ENCODE measurements at regions of chr12 and their contacts with region 1.

Region 1: GRCh38 chr12:43957732-43958372 is 122.0 kb downstream of the TMEM117 start:
- DNase-seq: peak; percentile 49
- ATAC-seq: peak; percentile 90
- H3K4me3 ChIP-seq: no peak overlapping the region
- H3K27ac ChIP-seq: no peak overlapping the region
- H3K4me1 ChIP-seq: no peaks in the 10 kb centered on the region
- H3K27me3 ChIP-seq: no peaks in the 10 kb centered on the region
- CTCF ChIP-seq: peak; percentile 79
- EP300 ChIP-seq: no peak
- POLR2A ChIP-seq: no peak
- RAD21 ChIP-seq: peak; percentile 23; the same call in 1 of the 2 replicates

Region 2: GRCh38 chr12:44000309-44000952 is 42.6 kb after region 1 on chr12:
- CTCF ChIA-PET with region 1: no interaction called
- POLR2A ChIA-PET with region 1: no interaction called
- in situ Hi-C with region 1: no loop called
- intact Hi-C with region 1: loop called (anchors 5 kb)
- DNase-seq: peak; percentile 81
- ATAC-seq: peak; percentile 99
- H3K4me3 ChIP-seq: no peak overlapping the region
- H3K27ac ChIP-seq: no peak overlapping the region
- H3K4me1 ChIP-seq: peaks cover 12% of the 10 kb centered on the region
- H3K27me3 ChIP-seq: no peaks in the 10 kb centered on the region
- CTCF ChIP-seq: peak; percentile 75
- EP300 ChIP-seq: no peak
- POLR2A ChIP-seq: no peak
- RAD21 ChIP-seq: peak; percentile 53; the same call in 1 of the 2 replicates

Region 3: GRCh38 chr12:44930972-44931600 is 973.2 kb after region 1 on chr12:
- CTCF ChIA-PET with region 1: interaction called, 3 read pairs
- POLR2A ChIA-PET with region 1: no interaction called
- in situ Hi-C with region 1: no loop called
- intact Hi-C with region 1: loop called (anchors 1 kb)
- DNase-seq: peak; percentile 49
- ATAC-seq: no peak
- H3K4me3 ChIP-seq: no peak overlapping the region
- H3K27ac ChIP-seq: no peak overlapping the region
- H3K4me1 ChIP-seq: no peaks in the 10 kb centered on the region
- H3K27me3 ChIP-seq: peaks cover 0 to 3% of the 10 kb centered on the region in 2 experiments; a peak in 1 of 5 replicates
- CTCF ChIP-seq: peak; percentile 56
- EP300 ChIP-seq: no peak
- POLR2A ChIP-seq: no peak
- RAD21 ChIP-seq: no peak

Measured in HepG2 (cell line).